ENCODE measurements at regions of chr9 and their contacts with region 1.

Region 1: DNA sequence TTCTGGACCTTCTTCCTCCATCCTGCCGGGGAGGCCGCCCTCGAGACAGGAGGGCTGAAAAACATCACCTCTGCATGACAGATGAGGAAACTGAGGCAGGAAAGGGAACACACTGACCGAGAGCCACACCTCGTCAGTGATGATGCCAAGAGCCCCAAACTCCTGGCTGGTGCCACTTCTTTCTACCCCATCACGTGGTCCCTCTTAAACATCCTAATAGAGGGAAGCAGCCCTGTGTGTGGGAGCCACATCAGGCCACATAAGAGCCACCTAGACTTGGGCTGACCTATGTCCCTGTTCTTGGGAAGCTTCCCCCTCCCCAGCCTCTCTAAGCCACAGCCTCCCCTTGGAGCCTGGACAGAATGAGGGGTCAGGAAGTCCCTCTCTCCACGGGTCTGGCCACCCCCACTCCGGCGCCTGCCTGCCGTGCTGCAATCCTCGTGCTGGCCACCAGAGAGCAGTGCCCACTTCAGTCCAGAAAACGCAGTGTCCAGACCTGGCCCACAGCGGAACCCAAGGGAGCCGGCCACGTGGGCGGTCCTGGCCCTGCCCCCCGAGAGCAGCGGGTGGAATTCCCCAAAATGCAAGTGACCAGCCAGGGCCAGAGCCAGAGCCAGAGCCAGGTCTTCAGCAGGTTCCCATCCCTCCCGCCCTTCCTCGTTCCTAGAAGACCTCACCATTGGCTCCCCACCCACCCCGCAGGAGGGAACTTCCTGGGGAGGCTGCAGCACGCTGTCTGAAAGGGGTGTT is 54.7 kb upstream of the SARDH start:
- DNase-seq: peak; percentile 77 to 88 (median 84)
- H3K4me3 ChIP-seq: no peak overlapping the region
- H3K27ac ChIP-seq: peak overlapping the region in 1 of 5 donors; percentile 1
- H3K4me1 ChIP-seq: peaks cover 0 to 7% of the 10 kb centered on the region in 2 donors
- H3K27me3 ChIP-seq: no peaks in the 10 kb centered on the region
- CTCF ChIP-seq: peak; percentile 93 to 99 (median 97)
- POLR2A ChIP-seq: no peak

Region 2: DNA sequence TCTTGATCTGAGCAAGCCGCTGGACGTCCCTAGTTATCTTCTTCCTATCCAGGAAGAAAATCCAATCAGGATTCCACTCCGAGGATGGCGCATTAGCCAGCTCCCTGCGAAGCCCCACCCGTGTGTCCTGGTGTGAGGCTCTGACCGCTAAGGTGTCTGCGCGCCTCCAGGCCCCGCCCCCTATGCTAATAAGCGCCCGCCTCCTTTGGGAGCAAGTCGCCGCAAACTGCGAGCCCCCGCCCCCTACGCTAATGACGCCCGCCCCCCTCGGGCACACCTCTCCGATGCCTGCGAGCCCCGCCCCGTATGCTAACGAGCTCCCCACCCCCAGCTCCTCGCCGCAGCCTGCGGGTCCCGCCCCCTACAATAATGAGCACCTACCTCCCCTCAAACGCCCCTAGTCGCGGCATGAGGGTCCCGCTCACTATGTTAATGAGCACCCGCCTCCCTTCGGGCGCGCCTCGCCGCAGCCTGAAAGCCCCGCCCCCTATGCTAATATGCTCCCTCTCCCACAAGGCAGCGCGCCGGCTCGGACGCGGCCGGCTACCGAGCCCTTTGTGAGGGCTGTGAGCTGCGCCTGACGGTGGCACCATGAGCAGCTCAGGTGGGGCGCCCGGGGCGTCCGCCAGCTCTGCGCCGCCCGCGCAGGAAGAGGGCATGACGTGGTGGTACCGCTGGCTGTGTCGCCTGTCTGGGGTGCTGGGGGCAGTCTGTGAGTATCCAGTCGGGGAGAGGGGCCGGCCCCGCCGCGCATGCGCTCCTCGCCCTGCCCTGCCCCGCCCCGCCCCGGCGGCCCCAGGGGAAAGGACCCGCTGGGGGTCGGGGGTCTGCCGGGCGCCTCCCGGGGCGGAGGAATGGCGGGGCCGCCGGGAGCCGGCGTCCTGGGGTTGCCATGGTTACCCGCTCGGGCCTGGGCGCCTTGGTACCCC is 333.2 kb before region 1 on chr9 and contains the start of gene CACFD1:
- intact Hi-C with region 1: no loop called
- DNase-seq: peak; percentile 97 to 99 (median 98)
- H3K4me3 ChIP-seq: peak within 1 kb of the TSS; percentile 38 to 91 (median 60)
- H3K27ac ChIP-seq: peak within 1 kb of the TSS; percentile 33 to 96 (median 92)
- H3K4me1 ChIP-seq: peaks cover 0 to 21% of the 10 kb centered on the region in 2 donors
- H3K27me3 ChIP-seq: no peaks in the 10 kb centered on the region
- CTCF ChIP-seq: no peak
- POLR2A ChIP-seq: peak; percentile 78 to 80
- total RNA-seq, gene CACFD1: 11.4 to 29.5 (median 21.5) TPM

Region 3: DNA sequence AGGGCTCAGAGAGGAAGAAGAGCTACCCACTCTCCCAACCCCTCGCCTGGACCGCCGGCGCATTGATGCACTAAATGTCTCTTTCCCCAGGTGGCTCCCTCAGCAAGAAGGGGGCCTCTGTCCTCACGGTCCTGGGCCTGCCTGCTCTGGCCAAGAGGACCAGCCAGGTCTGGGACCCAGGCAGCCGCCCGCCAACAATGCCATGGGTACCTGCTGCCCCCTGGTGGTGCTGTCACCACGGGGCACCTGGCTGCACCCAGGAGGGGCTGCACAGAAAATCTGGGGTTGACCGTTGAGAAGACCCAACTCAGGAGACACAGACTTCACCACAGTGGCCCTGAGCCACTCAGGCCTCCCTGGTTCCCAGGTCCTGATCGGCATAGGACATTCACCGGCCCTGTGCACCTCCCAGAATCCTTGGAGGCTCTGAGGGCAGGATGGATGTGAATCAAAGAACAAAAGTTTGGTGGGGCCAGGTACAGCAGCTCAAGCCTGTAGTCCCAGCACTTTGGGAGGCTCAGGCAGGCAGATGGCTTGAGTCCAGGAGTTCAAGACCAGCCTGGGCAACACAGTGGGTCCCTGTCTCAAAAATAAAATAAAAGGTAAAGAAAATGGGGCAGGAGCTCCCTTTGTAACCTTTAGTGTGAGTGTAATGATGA is 201.6 kb after region 1 on chr9:
- intact Hi-C with region 1: loop called (anchors 2 kb)
- DNase-seq: peak; percentile 69 to 89 (median 85)
- H3K4me3 ChIP-seq: no peak overlapping the region
- H3K27ac ChIP-seq: no peak overlapping the region
- H3K4me1 ChIP-seq: peaks cover 15 to 23% of the 10 kb centered on the region in 2 donors
- H3K27me3 ChIP-seq: no peaks in the 10 kb centered on the region
- CTCF ChIP-seq: peak; percentile 97 to 99 (median 99)
- POLR2A ChIP-seq: no peak

Region 4: DNA sequence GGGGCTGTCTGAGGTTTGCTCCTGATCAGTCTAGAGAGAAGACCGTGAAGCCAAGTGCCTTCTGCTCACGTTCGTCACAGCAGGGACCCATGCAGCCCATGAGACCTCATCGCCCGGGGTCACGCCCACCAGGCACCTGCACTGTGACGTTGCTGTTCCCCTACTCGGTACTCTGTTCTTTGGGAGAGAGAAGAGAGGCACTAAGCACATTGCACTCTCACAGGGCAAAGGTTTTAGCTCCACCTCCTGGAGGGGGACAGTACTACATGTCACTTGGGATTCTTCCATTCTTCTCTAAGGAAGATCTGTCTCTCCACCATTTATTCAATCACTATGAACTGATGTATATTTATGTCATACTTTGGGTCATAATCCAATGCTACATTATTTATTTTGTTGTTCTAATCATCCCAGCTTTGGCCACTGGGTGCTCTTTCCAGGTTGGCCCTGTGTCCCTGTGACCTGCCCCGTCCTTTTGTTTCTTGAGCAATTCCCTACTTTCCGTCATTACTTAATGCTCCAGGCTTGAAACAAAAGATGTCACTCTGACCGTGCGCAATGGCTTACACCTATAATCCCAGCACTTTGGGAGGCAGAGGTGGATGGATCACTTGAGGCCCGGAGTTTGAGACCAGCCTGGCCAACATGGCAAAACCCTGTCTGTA is 306.4 kb after region 1 on chr9:
- intact Hi-C with region 1: loop called in 1 of 2 experiments (anchors 10 kb)
- DNase-seq: peak; percentile 41 to 79 (median 51)
- H3K4me3 ChIP-seq: no peak overlapping the region
- H3K27ac ChIP-seq: no peak overlapping the region
- H3K4me1 ChIP-seq: no peaks in the 10 kb centered on the region
- H3K27me3 ChIP-seq: no peaks in the 10 kb centered on the region
- CTCF ChIP-seq: peak; percentile 68 to 83 (median 76)
- POLR2A ChIP-seq: no peak

Measured in adrenal gland (tissue), 19 donors.